ENCODE measurements at regions of chr14 and their contacts with region 1.

Region 1: GRCh38 chr14:89445273-89445973 is 28.4 kb upstream of the FOXN3 start:
- H3K4me3 ChIP-seq: no peak overlapping the region
- H3K27ac ChIP-seq: no peak overlapping the region
- H3K4me1 ChIP-seq: no peaks in the 10 kb centered on the region
- CTCF ChIP-seq: no peak

Region 2: GRCh38 chr14:89406941-89407340 is 38.5 kb before region 1 on chr14:
- CTCF ChIA-PET with region 1: no interaction called
- POLR2A ChIA-PET with region 1: no interaction called
- H3K4me3 ChIP-seq: no peak overlapping the region
- H3K27ac ChIP-seq: no peak overlapping the region
- H3K4me1 ChIP-seq: peaks cover 10% of the 10 kb centered on the region
- CTCF ChIP-seq: no peak

Region 3: DNA sequence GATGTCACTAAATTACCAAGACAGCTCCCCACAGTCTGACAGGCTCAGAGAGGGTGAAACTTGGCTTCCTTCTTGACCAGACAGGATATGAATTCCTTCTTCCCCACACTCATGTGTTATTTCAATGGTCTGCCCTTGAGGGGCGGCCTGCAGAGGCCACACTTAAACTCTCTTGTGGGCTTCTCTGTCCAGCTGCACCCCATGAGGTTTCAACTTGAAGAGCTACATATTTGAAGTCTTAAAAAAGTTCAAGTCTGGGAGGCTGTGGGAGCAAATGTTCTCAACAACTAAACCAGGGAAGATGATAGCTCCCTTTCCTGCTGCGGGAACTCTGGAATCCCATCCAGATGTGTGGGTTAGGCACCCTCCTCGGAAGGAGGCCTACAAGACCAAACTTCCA is 1272.5 kb after region 1 on chr14:
- CTCF ChIA-PET with region 1: no interaction called
- POLR2A ChIA-PET with region 1: interaction called, 12 read pairs
- H3K4me3 ChIP-seq: no peak overlapping the region
- H3K27ac ChIP-seq: no peak overlapping the region
- H3K4me1 ChIP-seq: no peaks in the 10 kb centered on the region
- CTCF ChIP-seq: no peak

Measured in HEK293 (cell line).